ENCODE measurements at regions of chr5 and their contacts with region 1.

Region 1: GRCh38 chr5:63963080-63963735 is 963 bp upstream of the HTR1A start:
- DNase-seq: no peak
- H3K4me3 ChIP-seq: no peak overlapping the region
- H3K27ac ChIP-seq: no peak overlapping the region
- H3K4me1 ChIP-seq: no peaks in the 10 kb centered on the region
- H3K27me3 ChIP-seq: peaks cover 0 to 46% (median 35%) of the 10 kb centered on the region in 7 donors
- CTCF ChIP-seq: peak in 4 of 11 experiments; percentile 18 to 39 (median 32)
- POLR2A ChIP-seq: no peak

Region 2: DNA sequence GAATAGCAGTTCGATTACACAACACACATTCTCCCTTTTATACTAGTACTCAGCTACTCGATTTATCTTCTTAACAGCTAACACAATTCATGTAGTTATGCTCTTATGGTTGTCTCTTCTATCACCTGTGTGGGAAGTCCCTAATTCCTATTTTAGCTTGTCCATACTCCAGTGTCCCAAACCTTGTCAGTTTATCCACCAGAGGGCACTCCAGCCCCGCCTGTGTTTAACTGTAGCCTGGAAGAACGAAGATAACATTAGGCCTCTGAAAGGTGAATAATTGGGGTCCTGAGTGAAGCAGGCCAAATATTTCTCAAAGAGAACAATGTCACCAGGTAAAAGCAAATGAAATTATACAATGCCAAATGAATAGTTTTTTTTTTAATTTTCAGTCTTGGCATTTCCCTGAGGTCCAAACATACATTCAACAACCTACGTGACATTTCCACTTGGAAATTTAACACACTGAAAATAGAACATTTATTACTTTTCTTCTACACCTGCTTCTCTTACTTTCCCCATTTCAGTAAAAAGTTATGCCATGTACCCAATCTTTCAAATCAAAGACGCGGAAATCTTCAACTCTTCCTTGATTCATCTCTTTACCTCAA is 561.7 kb before region 1 on chr5:
- intact Hi-C with region 1: loop called (anchors 10 kb)
- DNase-seq: no peak
- H3K4me3 ChIP-seq: no peak overlapping the region
- H3K27ac ChIP-seq: no peak overlapping the region
- H3K4me1 ChIP-seq: no peaks in the 10 kb centered on the region
- H3K27me3 ChIP-seq: no peaks in the 10 kb centered on the region
- CTCF ChIP-seq: peak in 6 of 11 experiments; percentile 20 to 48 (median 40)
- POLR2A ChIP-seq: no peak

Measured in spleen (tissue), 13 donors.